GM23248 (cell line): ENCODE measurements at regions of chr9 and their contacts with region 1.

Region 1: GRCh38 chr9:71249729-71250317 is 128.4 kb upstream of the TRPM3 start:
- DNase-seq: peak; percentile 80
- H3K4me3 ChIP-seq: no peak overlapping the region
- H3K27ac ChIP-seq: no peak overlapping the region
- H3K4me1 ChIP-seq: no peaks in the 10 kb centered on the region
- H3K27me3 ChIP-seq: peaks cover 3% of the 10 kb centered on the region; the same call in 1 of the 2 replicates

Region 2: DNA sequence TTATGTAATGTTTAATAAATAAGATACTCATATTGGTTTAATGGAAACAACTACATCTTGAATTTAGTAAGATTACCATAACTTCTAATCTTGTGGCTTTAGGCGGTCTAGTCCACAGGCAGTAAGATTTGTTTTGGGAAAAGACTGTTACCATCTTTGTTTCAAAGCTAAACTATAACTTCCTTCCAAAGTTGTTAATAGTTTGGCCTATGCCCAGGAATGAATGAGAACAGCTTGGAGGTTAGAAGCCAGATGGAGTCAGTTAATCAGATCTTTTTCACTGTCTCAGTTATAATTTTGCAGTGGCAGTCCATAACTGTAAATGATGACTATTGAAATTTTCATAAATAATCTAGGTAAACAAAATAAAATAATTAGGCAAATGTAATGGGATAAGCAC is 593.5 kb before region 1 on chr9:
- in situ Hi-C with region 1: loop called (anchors 10 kb)
- DNase-seq: no peak
- H3K4me3 ChIP-seq: no peak overlapping the region
- H3K27ac ChIP-seq: no peak overlapping the region
- H3K4me1 ChIP-seq: no peaks in the 10 kb centered on the region
- H3K27me3 ChIP-seq: no peaks in the 10 kb centered on the region; the same call in 1 of the 2 replicates

Region 3: DNA sequence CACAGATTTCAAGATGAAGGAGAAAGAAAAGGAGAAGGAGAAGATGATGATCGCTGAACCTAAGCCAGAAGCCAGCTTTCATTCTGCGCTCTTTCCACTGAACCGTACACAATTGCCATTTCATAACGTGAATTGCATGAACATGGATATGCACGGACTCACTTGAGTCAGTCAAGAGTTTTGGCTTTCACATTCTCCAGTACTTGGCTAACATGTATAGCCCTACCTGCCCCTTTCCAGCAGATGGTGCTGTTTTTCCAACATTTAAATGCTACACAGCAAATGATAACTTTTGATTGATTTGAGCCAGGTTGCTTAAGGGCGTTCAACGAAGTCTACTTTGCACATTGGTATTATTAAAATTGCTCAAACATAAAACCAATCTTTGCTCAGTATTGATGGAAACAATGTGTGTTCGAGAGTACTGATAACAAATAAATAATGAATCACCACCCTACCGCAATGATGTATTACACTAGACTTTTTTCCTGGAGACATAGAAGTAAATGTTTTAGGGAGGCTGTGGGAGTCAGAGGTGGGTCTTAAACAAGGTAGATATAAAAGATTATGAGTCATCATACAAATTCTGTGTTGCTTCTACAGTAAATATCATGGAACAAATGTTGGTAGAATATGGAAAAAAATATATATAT is 324.8 kb before region 1 on chr9:
- in situ Hi-C with region 1: loop called (anchors 5 kb)
- DNase-seq: peak; percentile 93
- H3K4me3 ChIP-seq: peak overlapping the region; percentile 71
- H3K27ac ChIP-seq: peak overlapping the region; percentile 63
- H3K4me1 ChIP-seq: peaks cover 23% of the 10 kb centered on the region; the same call in 1 of the 2 replicates
- H3K27me3 ChIP-seq: no peaks in the 10 kb centered on the region

Region 4: GRCh38 chr9:71830929-71831328 is 581.1 kb after region 1 on chr9:
- in situ Hi-C with region 1: no loop called
- DNase-seq: no peak
- H3K4me3 ChIP-seq: no peak overlapping the region
- H3K27ac ChIP-seq: no peak overlapping the region
- H3K4me1 ChIP-seq: no peaks in the 10 kb centered on the region
- H3K27me3 ChIP-seq: no peaks in the 10 kb centered on the region